ENCODE measurements at regions of chr12 and their contacts with region 1.

Region 1: DNA sequence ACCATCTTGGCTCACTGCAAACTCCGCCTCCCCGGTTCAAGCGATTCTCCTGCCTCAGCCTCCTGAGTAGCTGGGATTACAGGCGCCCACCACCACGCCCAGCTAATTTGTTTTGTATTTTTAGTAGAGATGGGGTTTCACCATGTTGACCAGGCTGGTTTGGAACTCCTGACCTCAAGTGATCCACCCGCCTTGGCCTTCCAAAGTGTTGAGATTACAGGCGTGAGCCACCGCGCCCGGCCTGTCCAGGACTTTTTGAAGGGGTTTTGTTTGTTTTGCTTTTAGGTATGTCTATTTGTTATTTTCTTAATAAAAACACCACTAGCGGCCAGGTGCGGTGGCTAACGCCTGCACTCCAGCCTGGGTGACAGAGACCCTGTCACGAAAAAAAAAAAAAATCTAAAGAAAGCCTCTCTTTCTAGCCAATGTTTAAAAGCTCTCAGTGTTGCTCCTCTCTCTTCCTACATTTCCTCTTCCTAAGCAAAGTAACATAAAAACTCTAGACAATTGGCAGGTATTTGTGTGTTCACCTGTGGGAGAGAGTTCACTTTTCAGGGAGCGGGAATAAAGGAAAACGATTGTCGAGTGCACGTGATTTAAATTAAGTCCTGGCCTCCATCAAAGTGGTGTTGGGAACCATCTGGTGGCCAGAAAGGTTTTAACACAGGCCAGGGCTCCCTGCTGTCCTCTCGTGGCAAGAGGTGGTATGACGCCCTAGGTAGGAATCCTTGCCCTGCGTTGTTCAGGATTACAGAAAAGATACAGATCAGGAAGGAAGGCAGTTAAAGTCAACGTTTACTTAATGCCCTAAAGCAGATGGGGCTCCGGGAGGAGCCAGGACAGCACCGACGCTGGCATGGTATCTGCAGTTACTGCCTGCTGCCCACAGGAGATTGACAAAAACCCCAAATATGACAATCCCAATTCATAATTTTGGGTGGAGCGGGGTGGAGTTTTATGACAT is 36.2 kb upstream of the ATP23 start:
- DNase-seq: peak; percentile 94
- H3K4me3 ChIP-seq: no peak overlapping the region
- H3K27ac ChIP-seq: no peak overlapping the region
- H3K4me1 ChIP-seq: no peaks in the 10 kb centered on the region
- H3K27me3 ChIP-seq: no peaks in the 10 kb centered on the region
- CTCF ChIP-seq: peak; percentile 100

Region 2: GRCh38 chr12:57803319-57803893 is 101.7 kb before region 1 on chr12:
- CTCF ChIA-PET with region 1: interaction called, 5 read pairs
- POLR2A ChIA-PET with region 1: no interaction called
- intact Hi-C with region 1: loop called (anchors 1 kb)
- DNase-seq: peak; percentile 66
- H3K4me3 ChIP-seq: no peak overlapping the region
- H3K27ac ChIP-seq: no peak overlapping the region
- H3K4me1 ChIP-seq: no peaks in the 10 kb centered on the region
- H3K27me3 ChIP-seq: no peaks in the 10 kb centered on the region
- CTCF ChIP-seq: peak; percentile 86

Region 3: GRCh38 chr12:57836442-57837375 is 68.4 kb before region 1 on chr12:
- CTCF ChIA-PET with region 1: no interaction called
- POLR2A ChIA-PET with region 1: no interaction called
- intact Hi-C with region 1: loop called (anchors 1 kb)
- DNase-seq: peak; percentile 95
- H3K4me3 ChIP-seq: peak overlapping the region; percentile 39
- H3K27ac ChIP-seq: peak overlapping the region; percentile 90
- H3K4me1 ChIP-seq: peaks cover 95% of the 10 kb centered on the region
- H3K27me3 ChIP-seq: no peaks in the 10 kb centered on the region
- CTCF ChIP-seq: no peak

Measured in A673 (cell line).